Activated CD4-positive, alpha-beta T cell treated with anti-CD3 and anti-CD28 coated beads for 36 hours (primary cell): ENCODE measurements at regions of chr10 and their contacts with region 1.

Region 1: GRCh38 chr10:15789793-15790525 is 70.2 kb upstream of the ITGA8 start:
- DNase-seq: no peak
- ATAC-seq: no peak
- H3K4me3 Mint-ChIP-seq: no peak overlapping the region
- H3K27ac Mint-ChIP-seq: no peak overlapping the region
- H3K4me1 Mint-ChIP-seq: peaks cover 3% of the 10 kb centered on the region
- H3K27me3 Mint-ChIP-seq: no peaks in the 10 kb centered on the region

Region 2: DNA sequence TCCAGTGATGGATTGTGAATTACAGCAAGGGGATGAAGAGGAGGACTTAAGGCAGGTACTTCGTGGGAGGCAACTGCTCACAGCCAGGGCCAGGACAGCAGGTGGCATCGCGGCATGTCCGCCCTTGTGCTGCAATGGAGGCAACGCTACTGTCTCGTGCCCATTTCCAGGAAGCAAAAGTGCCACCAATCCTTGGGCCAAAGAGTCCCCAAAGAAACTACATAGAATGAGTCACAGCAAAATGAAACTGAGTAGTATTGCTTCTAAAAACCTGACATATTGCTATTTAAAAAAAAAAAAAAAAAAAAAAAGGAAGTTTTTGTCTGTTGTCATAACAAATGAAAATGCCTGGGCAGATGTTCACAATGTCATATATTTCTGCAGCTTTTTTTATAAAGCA is 980.7 kb after region 1 on chr10:
- CTCF ChIA-PET with region 1: interaction called, 3 read pairs
- POLR2A ChIA-PET with region 1: interaction called, 11 read pairs
- intact Hi-C with region 1: no loop called
- DNase-seq: peak; percentile 30
- ATAC-seq: peak; percentile 84
- H3K4me3 Mint-ChIP-seq: no peak overlapping the region
- H3K27ac Mint-ChIP-seq: no peak overlapping the region
- H3K4me1 Mint-ChIP-seq: peaks cover 25% of the 10 kb centered on the region
- H3K27me3 Mint-ChIP-seq: no peaks in the 10 kb centered on the region